AG04449 (cell line): ENCODE measurements at regions of chr12 and their contacts with region 1.

Region 1: GRCh38 chr12:54439521-54440255 is 20.6 kb upstream of the ITGA5 start:
- DNase-seq: peak; percentile 71
- H3K4me3 ChIP-seq: no peak overlapping the region
- CTCF ChIP-seq: peak; percentile 68

Region 2: GRCh38 chr12:54239620-54240019 is 200.1 kb before region 1 on chr12:
- CTCF ChIA-PET with region 1: no interaction called
- POLR2A ChIA-PET with region 1: no interaction called
- DNase-seq: no peak
- H3K4me3 ChIP-seq: no peak overlapping the region
- CTCF ChIP-seq: no peak

Region 3: DNA sequence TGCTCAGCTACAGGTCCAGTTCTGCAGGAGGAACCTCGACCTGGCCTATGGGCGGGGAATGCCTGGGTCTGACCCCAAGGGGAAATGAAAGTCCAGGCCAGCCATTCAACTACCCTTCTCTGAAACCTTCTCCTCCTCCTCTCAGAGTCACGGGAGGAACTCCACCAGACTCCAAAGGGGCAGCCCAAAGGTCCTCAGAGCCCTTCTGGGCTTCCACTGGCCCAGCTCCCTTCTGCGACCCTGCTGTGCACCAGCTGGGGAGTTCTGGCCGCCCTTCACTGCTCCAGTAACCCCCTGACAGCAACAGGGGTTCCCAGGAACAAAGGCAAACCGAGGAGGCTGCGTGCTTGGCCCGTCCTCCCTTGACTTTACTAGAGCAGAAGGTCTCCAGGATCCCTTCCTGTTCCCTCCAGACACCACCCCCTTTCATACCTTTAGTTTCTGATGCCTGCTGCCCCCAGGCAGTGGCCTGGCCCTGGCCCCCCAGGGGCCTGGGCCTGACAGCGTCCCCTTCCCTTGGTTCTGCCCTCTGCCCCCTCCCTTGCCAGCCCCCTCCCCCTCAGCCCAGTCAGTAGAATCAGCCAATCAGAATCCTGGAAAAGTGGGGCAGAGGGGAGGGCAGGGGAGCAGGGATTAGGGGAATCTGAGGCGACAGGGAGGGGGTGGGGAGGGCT is 54.3 kb before region 1 on chr12:
- CTCF ChIA-PET with region 1: interaction called, 152 read pairs
- POLR2A ChIA-PET with region 1: no interaction called
- DNase-seq: no peak
- H3K4me3 ChIP-seq: no peak overlapping the region
- CTCF ChIP-seq: no peak

Region 4: GRCh38 chr12:54398995-54399793 is 40.5 kb before region 1 on chr12:
- CTCF ChIA-PET with region 1: interaction called, 940 read pairs
- POLR2A ChIA-PET with region 1: interaction called, 5 read pairs
- DNase-seq: no peak
- H3K4me3 ChIP-seq: no peak overlapping the region
- CTCF ChIP-seq: peak; percentile 99

Region 5: DNA sequence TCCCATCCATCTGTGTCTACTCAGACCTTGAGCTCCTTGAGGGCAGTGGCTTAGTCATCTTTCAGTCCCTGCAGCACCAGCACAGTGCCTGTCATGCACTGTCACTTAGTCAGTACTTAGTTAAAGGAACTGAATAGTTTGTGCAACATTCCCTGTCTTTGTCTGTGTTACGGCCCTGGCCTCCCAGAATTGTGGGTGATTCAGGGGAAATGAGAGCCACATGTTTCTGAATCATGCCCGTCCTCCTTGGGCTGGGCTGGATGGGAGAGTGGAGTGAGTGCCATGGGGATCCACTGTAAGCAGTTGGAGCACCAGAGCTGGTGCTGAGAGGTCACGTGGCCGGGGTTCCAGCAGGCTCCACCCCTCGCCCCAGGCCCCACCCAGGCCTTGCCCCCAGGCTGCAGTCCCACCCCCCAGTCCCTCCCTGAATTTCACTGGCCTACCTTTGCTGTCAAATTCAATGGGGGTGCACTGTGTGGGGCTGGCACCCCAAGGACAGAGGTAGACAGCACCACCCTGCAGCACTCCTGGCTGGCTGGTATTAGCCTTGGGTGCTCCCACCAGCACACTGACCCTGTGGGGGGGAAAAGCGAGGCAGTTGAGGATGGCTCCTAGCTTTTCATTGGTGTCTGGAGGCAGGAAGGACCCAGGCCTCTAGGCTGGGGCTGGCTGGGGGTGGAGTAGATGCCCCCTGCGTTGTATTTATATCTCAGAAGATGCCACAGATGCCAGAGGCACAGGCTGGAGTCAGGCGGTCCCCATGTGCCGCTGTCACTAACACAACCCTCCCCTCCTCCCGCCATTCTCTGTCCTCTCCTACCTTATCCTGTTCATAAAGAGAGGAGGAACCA is 28.1 kb before region 1 on chr12:
- CTCF ChIA-PET with region 1: interaction called, 940 read pairs
- POLR2A ChIA-PET with region 1: no interaction called
- DNase-seq: peak; percentile 77
- H3K4me3 ChIP-seq: no peak overlapping the region
- CTCF ChIP-seq: no peak

Region 6: GRCh38 chr12:54419088-54419892 is 20.4 kb before region 1 on chr12 and contains the start of gene ITGA5:
- CTCF ChIA-PET with region 1: interaction called, 116 read pairs
- POLR2A ChIA-PET with region 1: no interaction called
- DNase-seq: no peak
- H3K4me3 ChIP-seq: peak within 1 kb of the TSS; percentile 87
- CTCF ChIP-seq: no peak

Region 7: DNA sequence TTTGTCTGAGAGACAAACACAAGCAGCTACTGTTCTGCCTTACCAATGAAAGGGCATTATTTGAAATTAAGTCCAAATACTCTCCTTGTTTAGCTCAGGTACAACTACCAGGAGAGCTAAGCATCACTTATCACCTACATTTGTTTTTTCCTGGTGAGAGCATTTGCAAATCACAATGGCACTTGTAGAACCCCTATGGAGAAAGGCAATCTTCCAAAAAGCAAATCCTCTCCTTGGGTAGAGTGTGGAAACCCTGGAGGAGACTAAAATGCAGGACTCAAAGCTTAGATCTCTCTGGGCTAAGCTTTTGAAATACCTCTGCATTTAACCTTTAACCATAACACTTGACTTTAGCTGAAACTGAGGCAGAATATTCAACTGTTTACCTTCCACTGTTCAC is 12.9 kb after region 1 on chr12:
- CTCF ChIA-PET with region 1: interaction called, 26 read pairs
- POLR2A ChIA-PET with region 1: no interaction called
- DNase-seq: no peak
- H3K4me3 ChIP-seq: no peak overlapping the region
- CTCF ChIP-seq: no peak

Region 8: DNA sequence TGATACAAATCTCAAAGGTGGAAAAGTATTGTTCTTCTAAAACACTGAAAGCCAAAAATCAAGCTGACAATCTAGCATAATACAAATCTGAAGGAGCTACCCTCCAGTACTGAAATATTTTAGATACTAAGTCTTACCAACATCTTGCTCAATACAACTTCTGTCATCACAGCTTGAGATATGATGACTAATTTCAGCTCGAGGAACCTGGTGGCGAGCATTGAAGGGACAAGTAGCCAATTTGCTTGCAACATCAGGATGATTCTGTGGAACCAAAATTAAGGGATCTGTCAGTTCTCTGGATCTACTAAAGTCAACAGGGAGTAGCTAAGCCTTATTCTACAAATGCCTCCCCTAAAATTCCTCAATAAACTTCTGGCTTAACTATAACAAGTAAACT is 23.3 kb after region 1 on chr12:
- CTCF ChIA-PET with region 1: interaction called, 11 read pairs
- POLR2A ChIA-PET with region 1: no interaction called
- DNase-seq: no peak
- H3K4me3 ChIP-seq: no peak overlapping the region
- CTCF ChIP-seq: no peak